ENCODE measurements at regions of chrX and their contacts with region 1.

Region 1: DNA sequence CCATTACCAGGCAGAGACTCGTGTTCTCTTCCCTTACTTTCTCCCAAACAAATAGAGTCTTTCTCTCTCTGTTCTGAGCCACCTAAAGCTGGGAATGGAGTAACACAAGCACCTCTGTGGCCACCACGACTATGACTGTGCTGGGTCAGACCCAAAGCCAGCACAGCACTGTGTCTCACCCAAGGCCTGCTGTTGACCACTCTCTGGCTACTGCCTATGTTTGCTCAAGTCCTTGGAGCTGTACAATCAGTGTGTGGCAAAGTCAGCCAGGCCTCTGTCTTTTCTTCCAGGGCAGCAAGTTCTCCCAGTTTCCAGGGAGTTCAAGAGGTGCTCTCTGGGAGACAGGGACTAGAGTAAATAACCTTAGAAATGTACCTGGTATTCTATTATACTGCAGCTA is 239.4 kb downstream of the FAM47A start:
- DNase-seq: no peak
- H3K4me3 ChIP-seq: no peak overlapping the region
- H3K27ac ChIP-seq: peak overlapping the region in 1 of 2 donors; percentile 58
- H3K4me1 ChIP-seq: no peaks in the 10 kb centered on the region
- H3K27me3 ChIP-seq: no peaks in the 10 kb centered on the region
- CTCF ChIP-seq: no peak

Region 2: GRCh38 chrX:33589316-33589715 is 303.4 kb before region 1 on chrX:
- intact Hi-C with region 1: no loop called
- DNase-seq: no peak
- H3K4me3 ChIP-seq: no peak overlapping the region
- H3K27ac ChIP-seq: no peak overlapping the region
- H3K4me1 ChIP-seq: no peaks in the 10 kb centered on the region
- H3K27me3 ChIP-seq: no peaks in the 10 kb centered on the region
- CTCF ChIP-seq: no peak

Region 3: GRCh38 chrX:33725535-33726210 is 167.0 kb before region 1 on chrX:
- intact Hi-C with region 1: loop called (anchors 5 kb)
- DNase-seq: no peak
- H3K4me3 ChIP-seq: peak overlapping the region; percentile 28 to 64
- H3K27ac ChIP-seq: peak overlapping the region in 1 of 2 donors; percentile 15
- H3K4me1 ChIP-seq: no peaks in the 10 kb centered on the region
- H3K27me3 ChIP-seq: no peaks in the 10 kb centered on the region
- CTCF ChIP-seq: no peak